CD4-positive, alpha-beta T cell (primary cell): ENCODE measurements at regions of chr6 and their contacts with region 1.

Region 1: GRCh38 chr6:74133073-74133472 is 437.1 kb downstream of the CD109 start:
- DNase-seq: no peak
- ATAC-seq: no peak
- H3K4me3 ChIP-seq: no peak overlapping the region
- H3K4me3 Mint-ChIP-seq: no peak overlapping the region
- H3K27ac ChIP-seq: no peak overlapping the region
- H3K27ac Mint-ChIP-seq: no peak overlapping the region
- H3K4me1 ChIP-seq: no peaks in the 10 kb centered on the region
- H3K4me1 Mint-ChIP-seq: no peaks in the 10 kb centered on the region
- H3K27me3 ChIP-seq: no peaks in the 10 kb centered on the region
- H3K27me3 Mint-ChIP-seq: no peaks in the 10 kb centered on the region
- CTCF ChIP-seq: no peak

Region 2: DNA sequence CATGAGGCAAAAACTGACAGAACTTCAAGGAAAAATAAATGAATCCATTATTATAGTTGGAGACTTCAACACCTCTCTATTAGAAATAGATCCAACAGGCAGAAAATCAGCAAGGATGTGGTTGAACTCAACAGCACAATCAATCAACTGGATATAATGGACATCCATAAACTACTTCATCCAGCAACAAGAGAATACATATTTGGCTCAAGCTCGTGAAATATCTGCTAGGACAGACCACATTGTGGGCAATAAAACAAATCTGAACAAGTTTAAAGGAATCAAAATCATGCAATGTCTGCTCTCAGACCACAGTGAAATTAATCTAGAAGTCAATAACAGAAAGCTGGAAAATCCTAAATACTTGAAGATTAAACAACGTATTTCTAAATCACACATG is 74.5 kb before region 1 on chr6:
- CTCF ChIA-PET with region 1: no interaction called
- POLR2A ChIA-PET with region 1: no interaction called
- intact Hi-C with region 1: loop called in 1 of 2 experiments (anchors 2 kb)
- DNase-seq: no peak
- ATAC-seq: no peak
- H3K4me3 ChIP-seq: no peak overlapping the region
- H3K4me3 Mint-ChIP-seq: no peak overlapping the region
- H3K27ac ChIP-seq: no peak overlapping the region
- H3K27ac Mint-ChIP-seq: no peak overlapping the region
- H3K4me1 ChIP-seq: no peaks in the 10 kb centered on the region
- H3K4me1 Mint-ChIP-seq: no peaks in the 10 kb centered on the region
- H3K27me3 ChIP-seq: no peaks in the 10 kb centered on the region
- H3K27me3 Mint-ChIP-seq: peaks cover 1% of the 10 kb centered on the region
- CTCF ChIP-seq: no peak